ENCODE measurements at regions of chr16 and their contacts with region 1.

Region 1: DNA sequence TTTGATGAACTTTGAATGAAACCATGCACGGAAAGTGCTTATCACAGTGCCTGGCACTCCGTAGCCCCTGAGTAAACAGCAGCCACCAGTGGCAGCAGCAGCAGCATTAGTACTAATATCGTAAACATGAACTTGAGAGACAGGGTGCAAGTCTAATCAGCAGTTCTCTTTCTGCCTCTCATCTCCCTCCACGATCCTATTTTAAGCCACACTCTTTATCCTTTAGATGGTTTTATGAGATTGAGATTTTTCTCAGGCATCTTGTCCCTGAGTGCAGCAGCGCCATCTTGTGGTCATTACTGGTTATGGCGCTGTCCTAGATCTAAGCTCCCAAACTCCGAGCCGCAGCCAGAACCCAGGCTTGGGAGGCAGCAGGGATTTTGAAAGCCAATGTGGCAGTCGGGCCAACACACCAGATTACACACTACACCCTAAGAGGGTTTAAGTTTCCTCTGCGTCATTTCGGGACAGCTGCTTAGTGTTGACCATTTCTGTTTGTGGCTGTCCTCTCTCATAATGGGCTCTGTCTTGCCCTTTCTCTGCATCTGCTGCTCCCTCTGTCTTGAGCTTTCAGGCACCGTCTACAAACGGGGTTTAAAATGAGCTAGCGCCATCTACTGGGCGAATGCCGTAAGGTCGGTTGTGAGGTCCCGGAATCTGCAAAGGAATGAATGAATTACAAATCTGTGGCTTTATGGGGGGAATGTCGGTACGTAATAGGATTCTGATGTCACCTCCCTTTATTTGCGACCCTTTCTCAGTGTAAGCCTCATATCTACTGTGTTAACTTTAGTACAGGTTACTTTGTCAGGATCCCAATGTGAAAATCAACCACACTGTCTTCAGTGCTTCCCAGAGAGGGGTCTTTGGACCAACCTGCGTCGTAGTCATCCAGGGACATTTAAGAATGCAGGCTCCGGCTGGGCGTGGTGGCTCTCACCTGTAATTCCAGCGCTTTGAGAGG is 64.5 kb downstream of the CYLD start:
- DNase-seq: peak; percentile 90
- H3K4me3 Mint-ChIP-seq: peak overlapping the region; percentile 61
- H3K27ac Mint-ChIP-seq: no peak overlapping the region
- H3K4me1 Mint-ChIP-seq: no peaks in the 10 kb centered on the region
- H3K27me3 Mint-ChIP-seq: no peaks in the 10 kb centered on the region
- CTCF ChIP-seq: peak; percentile 78

Region 2: DNA sequence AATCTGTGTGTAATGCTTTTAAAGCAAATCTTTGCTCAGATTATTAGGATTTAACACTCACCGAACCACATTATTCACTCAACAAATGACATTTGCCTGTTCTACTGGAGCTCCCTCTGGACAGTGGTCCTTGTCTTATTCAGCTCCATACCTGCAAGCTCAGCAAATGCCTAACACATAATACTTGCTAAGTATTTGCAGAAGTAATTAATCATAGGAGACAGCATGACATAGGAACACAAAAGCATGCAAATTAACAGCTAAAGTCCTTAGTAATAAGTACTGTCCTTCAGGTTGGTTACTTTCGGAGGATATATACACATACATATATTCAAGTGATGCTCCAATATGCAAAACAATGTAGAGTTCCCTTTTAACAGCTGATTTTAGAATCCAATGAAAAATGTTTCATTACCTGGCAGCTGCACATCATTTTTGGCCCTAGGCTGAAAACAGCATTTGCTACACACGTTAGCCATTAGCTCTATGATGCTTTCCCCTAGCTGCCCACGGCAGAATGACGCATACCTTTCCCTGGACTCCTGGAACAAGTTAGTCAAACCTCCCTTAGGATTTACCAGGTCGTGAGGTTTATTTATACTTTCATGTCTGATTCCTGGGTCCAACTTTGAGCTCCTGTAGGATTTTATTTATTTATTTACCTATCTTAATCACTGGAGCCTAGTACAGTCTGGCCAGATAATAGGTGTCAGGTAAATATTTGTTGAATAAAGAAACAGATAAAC is 446.2 kb before region 1 on chr16:
- CTCF ChIA-PET with region 1: interaction called, 4 read pairs
- POLR2A ChIA-PET with region 1: no interaction called
- intact Hi-C with region 1: loop called (anchors 1 kb)
- DNase-seq: peak; percentile 70
- H3K4me3 Mint-ChIP-seq: no peak overlapping the region
- H3K27ac Mint-ChIP-seq: peak overlapping the region; percentile 87
- H3K4me1 Mint-ChIP-seq: peaks cover 33% of the 10 kb centered on the region
- H3K27me3 Mint-ChIP-seq: no peaks in the 10 kb centered on the region
- CTCF ChIP-seq: no peak

Region 3: GRCh38 chr16:50747207-50747956 is 59.0 kb before region 1 on chr16:
- CTCF ChIA-PET with region 1: interaction called, 12 read pairs
- POLR2A ChIA-PET with region 1: no interaction called
- intact Hi-C with region 1: no loop called
- DNase-seq: peak; percentile 45
- H3K4me3 Mint-ChIP-seq: no peak overlapping the region
- H3K27ac Mint-ChIP-seq: no peak overlapping the region
- H3K4me1 Mint-ChIP-seq: peaks cover 29% of the 10 kb centered on the region
- H3K27me3 Mint-ChIP-seq: no peaks in the 10 kb centered on the region
- CTCF ChIP-seq: peak; percentile 51

Region 4: GRCh38 chr16:50781043-50781442 is 25.3 kb before region 1 on chr16:
- CTCF ChIA-PET with region 1: interaction called, 47 read pairs
- POLR2A ChIA-PET with region 1: interaction called, 3 read pairs
- intact Hi-C with region 1: no loop called
- DNase-seq: no peak
- H3K4me3 Mint-ChIP-seq: no peak overlapping the region
- H3K27ac Mint-ChIP-seq: no peak overlapping the region
- H3K4me1 Mint-ChIP-seq: no peaks in the 10 kb centered on the region
- H3K27me3 Mint-ChIP-seq: no peaks in the 10 kb centered on the region
- CTCF ChIP-seq: no peak

Region 5: DNA sequence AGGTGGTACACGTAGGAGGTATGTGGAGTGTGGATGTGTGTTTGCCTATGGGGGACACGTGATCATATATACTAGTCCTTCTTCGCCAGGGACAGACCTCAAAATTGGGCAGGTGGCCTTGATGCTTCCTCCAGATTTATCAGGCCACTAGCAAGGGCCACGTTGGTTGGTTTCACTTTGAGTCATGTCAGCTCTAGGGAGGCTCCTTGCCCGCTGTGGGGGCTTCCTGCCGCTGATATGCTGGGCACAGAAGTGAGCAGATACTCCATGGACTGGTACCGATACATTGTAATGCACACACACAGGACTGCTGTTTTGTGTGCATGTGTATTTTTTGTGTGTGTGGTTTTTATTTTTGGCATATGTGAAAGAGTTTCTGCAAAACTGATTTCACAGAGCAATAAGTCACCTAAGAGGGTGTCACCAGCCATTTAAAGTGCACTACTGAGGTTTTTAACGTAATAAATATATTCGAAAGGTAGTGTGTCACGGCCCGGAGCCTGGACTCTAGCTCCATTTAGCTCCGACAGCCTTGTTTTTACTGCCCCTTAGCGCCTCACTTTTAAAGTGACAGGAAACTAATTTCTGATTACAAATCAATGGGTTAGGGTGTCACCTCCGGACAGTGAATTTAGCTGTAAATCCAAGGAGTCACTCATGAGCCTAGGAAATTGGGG is 950.2 kb after region 1 on chr16:
- CTCF ChIA-PET with region 1: interaction called, 20 read pairs
- POLR2A ChIA-PET with region 1: no interaction called
- intact Hi-C with region 1: no loop called
- DNase-seq: no peak
- H3K4me3 Mint-ChIP-seq: no peak overlapping the region
- H3K27ac Mint-ChIP-seq: no peak overlapping the region
- H3K4me1 Mint-ChIP-seq: no peaks in the 10 kb centered on the region
- H3K27me3 Mint-ChIP-seq: no peaks in the 10 kb centered on the region
- CTCF ChIP-seq: no peak